Dorsolateral prefrontal cortex (tissue), 120 donors: ENCODE measurements at regions of chr18 and their contacts with region 1.

Region 1: GRCh38 chr18:28167835-28168349 is 9.0 kb downstream of the CDH2 start:
- DNase-seq: no peak
- H3K4me3 ChIP-seq: no peak overlapping the region
- H3K27ac ChIP-seq: no peak overlapping the region
- H3K27me3 ChIP-seq: no peaks in the 10 kb centered on the region
- CTCF ChIP-seq: no peak

Region 2: GRCh38 chr18:27887287-27887686 is 280.6 kb before region 1 on chr18:
- intact Hi-C with region 1: no loop called
- DNase-seq: no peak
- H3K4me3 ChIP-seq: no peak overlapping the region
- H3K27ac ChIP-seq: no peak overlapping the region
- H3K27me3 ChIP-seq: no peaks in the 10 kb centered on the region
- CTCF ChIP-seq: no peak

Region 3: DNA sequence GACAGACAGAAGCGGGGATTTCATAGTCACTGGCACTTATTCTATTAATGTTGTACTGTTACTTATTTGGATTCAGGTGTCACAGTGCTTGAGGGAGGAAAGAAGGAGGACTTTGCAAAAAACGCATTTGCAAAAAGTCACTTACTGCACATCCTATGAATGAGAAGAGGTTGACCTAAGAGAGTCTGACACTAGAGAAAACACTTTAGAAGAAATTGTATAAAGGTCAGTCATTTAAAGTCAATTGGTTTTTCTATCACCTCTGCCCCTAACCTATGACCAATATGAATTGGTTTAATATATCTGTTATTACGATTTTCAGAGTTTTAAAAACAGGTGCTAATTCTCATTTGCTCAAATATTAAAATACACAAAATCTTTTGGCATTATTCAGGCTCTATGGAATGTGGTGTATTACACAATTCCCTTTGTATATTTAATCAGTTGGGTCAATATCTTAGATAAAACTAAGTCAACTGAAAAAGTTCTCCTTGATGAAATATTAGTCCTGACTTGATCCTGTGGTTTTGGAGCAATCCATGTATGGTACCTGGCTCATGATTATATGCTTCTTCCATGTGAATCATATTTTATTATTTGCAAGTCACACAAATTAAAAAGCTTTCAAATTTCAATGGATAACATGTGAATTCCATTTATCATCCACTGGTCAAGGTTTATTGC is 148.3 kb before region 1 on chr18:
- intact Hi-C with region 1: loop called in 1 of 2 experiments (anchors 5 kb)
- DNase-seq: no peak
- H3K4me3 ChIP-seq: no peak overlapping the region
- H3K27ac ChIP-seq: no peak overlapping the region
- H3K27me3 ChIP-seq: no peaks in the 10 kb centered on the region
- CTCF ChIP-seq: no peak